ENCODE measurements at regions of chr11 and their contacts with region 1.

Region 1: GRCh38 chr11:93529707-93530467 is 13.3 kb downstream of the SMCO4 start:
- DNase-seq: no peak
- H3K4me3 ChIP-seq: no peak overlapping the region
- H3K27ac ChIP-seq: peak overlapping the region; percentile 78 to 85
- H3K4me1 ChIP-seq: peaks cover 13 to 24% of the 10 kb centered on the region in 2 donors
- H3K27me3 ChIP-seq: no peaks in the 10 kb centered on the region
- CTCF ChIP-seq: no peak

Region 2: DNA sequence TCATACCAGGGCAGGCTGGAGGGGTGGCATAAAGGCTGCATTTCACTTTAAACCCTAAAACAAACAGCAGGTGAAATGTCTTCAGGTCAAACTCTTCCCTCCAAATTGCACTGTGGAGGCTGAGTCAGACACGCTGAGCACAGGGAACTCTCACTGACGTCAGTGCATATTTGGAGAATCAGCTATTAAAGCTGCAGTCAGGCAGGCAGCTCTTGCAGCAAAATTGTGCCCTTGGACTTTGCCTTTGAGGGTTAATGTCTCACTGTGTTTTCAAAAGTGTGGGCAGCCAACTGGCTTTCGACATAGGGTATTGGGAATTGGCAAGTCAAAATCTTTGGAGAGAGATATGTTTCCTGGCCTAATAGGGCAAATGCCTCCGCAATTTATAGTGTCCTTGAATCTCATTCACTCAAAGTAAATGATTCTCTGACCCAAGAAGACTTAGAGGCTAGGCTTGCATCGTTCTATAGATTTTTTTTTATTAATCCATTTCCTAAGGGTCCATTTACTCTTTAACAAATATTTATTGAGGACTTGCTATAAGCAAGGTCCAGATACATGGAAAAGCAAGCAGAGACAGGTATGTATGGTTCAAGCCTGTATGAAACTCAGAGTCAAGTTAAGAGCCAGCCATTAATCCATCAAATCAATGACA is 41.0 kb after region 1 on chr11:
- intact Hi-C with region 1: loop called (anchors 5 kb)
- DNase-seq: peak in 1 of 2 donors; percentile 77
- H3K4me3 ChIP-seq: no peak overlapping the region
- H3K27ac ChIP-seq: no peak overlapping the region
- H3K4me1 ChIP-seq: peaks cover 0 to 7% of the 10 kb centered on the region in 2 donors
- H3K27me3 ChIP-seq: no peaks in the 10 kb centered on the region
- CTCF ChIP-seq: no peak